Endothelial cell of umbilical vein (primary cell): ENCODE measurements at regions of chr10 and their contacts with region 1.

Region 1: GRCh38 chr10:125521721-125522680 is 161.0 kb downstream of the TEX36 start:
- DNase-seq: no peak
- H3K4me3 ChIP-seq: no peak overlapping the region
- H3K27ac ChIP-seq: no peak overlapping the region
- H3K4me1 ChIP-seq: no peaks in the 10 kb centered on the region
- H3K27me3 ChIP-seq: peaks cover 0 to 2% of the 10 kb centered on the region in 2 experiments
- CTCF ChIP-seq: peak; percentile 66 to 71
- POLR2A ChIP-seq: no peak

Region 2: GRCh38 chr10:125006921-125007426 is 515.0 kb before region 1 on chr10:
- CTCF ChIA-PET with region 1: no interaction called
- POLR2A ChIA-PET with region 1: no interaction called
- dilution Hi-C with region 1: no loop called
- intact Hi-C with region 1: no loop called
- DNase-seq: no peak
- H3K4me3 ChIP-seq: no peak overlapping the region
- H3K27ac ChIP-seq: no peak overlapping the region
- H3K4me1 ChIP-seq: no peaks in the 10 kb centered on the region
- H3K27me3 ChIP-seq: no peaks in the 10 kb centered on the region
- CTCF ChIP-seq: no peak
- POLR2A ChIP-seq: no peak

Region 3: DNA sequence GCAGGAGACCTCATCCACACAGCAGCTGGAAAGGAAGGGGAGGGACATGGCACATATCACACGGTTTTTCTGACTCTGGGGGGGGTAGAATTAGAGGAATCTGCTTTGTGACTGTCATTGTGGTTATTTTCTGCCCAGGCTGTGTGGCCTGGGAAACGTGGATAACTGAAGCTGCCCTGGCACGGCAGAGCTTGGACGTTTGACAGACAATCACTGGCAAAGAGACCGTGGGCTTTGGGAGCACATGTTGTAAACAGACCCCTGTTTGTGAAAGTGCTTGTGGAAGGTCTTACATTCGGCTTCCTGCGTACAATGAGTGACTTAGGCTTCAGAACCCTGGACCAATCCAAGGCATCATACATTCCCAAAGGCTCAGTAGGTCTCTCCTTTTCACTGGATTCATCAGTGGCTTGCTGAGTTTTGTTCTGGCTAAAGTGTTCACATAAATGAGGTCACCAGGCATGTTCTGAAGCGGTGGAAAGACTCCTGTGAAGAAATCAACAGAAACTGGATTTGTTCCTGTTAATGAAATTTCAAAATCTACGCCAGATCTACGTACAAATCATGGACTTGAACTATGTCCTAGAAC is 27.3 kb before region 1 on chr10:
- CTCF ChIA-PET with region 1: no interaction called
- POLR2A ChIA-PET with region 1: no interaction called
- dilution Hi-C with region 1: no loop called
- intact Hi-C with region 1: no loop called
- DNase-seq: no peak
- H3K4me3 ChIP-seq: no peak overlapping the region
- H3K27ac ChIP-seq: no peak overlapping the region
- H3K4me1 ChIP-seq: no peaks in the 10 kb centered on the region
- H3K27me3 ChIP-seq: peaks cover 3 to 8% of the 10 kb centered on the region in 2 experiments
- CTCF ChIP-seq: no peak
- POLR2A ChIP-seq: no peak

Region 4: GRCh38 chr10:125533866-125534265 is 11.9 kb after region 1 on chr10:
- CTCF ChIA-PET with region 1: interaction called, 10 read pairs
- POLR2A ChIA-PET with region 1: no interaction called
- dilution Hi-C with region 1: no loop called
- intact Hi-C with region 1: no loop called
- DNase-seq: no peak
- H3K4me3 ChIP-seq: no peak overlapping the region
- H3K27ac ChIP-seq: no peak overlapping the region
- H3K4me1 ChIP-seq: no peaks in the 10 kb centered on the region
- H3K27me3 ChIP-seq: peaks cover 2 to 3% of the 10 kb centered on the region in 2 experiments
- CTCF ChIP-seq: no peak
- POLR2A ChIP-seq: no peak